PC-3 (cell line): ENCODE measurements at regions of chr3 and their contacts with region 1.

Region 1: GRCh38 chr3:178966299-178967176 is 105.1 kb downstream of the ZMAT3 start:
- DNase-seq: peak; percentile 61
- ATAC-seq: peak; percentile 57
- H3K4me3 ChIP-seq: peak overlapping the region; percentile 26; the same call in 1 of the 2 replicates
- H3K27ac ChIP-seq: no peak overlapping the region
- H3K4me1 ChIP-seq: peaks cover 2% of the 10 kb centered on the region; the same call in 1 of the 2 replicates
- H3K27me3 ChIP-seq: peaks cover 4% of the 10 kb centered on the region; the same call in 1 of the 2 replicates
- CTCF ChIP-seq: peak; percentile 80

Region 2: DNA sequence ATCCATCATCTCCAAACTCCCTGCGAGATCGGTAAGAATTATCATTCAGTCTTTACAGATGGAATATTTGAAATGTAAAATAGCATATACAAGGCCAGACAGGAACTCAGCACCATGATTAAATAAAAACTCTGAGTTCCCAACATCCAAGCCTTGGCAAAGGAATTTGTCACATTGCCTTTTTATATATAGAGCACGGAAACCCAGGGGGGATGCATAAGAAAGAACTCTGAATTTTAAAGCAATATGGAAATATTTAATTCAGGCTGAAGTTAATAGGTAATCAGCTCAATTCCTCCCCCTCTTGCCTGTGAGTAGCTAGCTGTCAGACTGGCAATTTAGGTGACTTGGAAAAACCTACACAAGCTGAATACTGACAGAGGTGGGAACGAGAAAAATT is 648.2 kb before region 1 on chr3:
- CTCF ChIA-PET with region 1: no interaction called
- POLR2A ChIA-PET with region 1: no interaction called
- intact Hi-C with region 1: no loop called
- DNase-seq: no peak
- ATAC-seq: no peak
- H3K4me3 ChIP-seq: no peak overlapping the region
- H3K27ac ChIP-seq: no peak overlapping the region
- H3K4me1 ChIP-seq: no peaks in the 10 kb centered on the region
- H3K27me3 ChIP-seq: no peaks in the 10 kb centered on the region
- CTCF ChIP-seq: no peak

Region 3: GRCh38 chr3:178436773-178437172 is 529.8 kb before region 1 on chr3:
- CTCF ChIA-PET with region 1: interaction called, 3 read pairs
- POLR2A ChIA-PET with region 1: no interaction called
- intact Hi-C with region 1: loop called (anchors 1 kb)
- DNase-seq: peak; percentile 60
- ATAC-seq: no peak
- H3K4me3 ChIP-seq: no peak overlapping the region
- H3K27ac ChIP-seq: no peak overlapping the region
- H3K4me1 ChIP-seq: no peaks in the 10 kb centered on the region
- H3K27me3 ChIP-seq: no peaks in the 10 kb centered on the region
- CTCF ChIP-seq: peak; percentile 70

Region 4: DNA sequence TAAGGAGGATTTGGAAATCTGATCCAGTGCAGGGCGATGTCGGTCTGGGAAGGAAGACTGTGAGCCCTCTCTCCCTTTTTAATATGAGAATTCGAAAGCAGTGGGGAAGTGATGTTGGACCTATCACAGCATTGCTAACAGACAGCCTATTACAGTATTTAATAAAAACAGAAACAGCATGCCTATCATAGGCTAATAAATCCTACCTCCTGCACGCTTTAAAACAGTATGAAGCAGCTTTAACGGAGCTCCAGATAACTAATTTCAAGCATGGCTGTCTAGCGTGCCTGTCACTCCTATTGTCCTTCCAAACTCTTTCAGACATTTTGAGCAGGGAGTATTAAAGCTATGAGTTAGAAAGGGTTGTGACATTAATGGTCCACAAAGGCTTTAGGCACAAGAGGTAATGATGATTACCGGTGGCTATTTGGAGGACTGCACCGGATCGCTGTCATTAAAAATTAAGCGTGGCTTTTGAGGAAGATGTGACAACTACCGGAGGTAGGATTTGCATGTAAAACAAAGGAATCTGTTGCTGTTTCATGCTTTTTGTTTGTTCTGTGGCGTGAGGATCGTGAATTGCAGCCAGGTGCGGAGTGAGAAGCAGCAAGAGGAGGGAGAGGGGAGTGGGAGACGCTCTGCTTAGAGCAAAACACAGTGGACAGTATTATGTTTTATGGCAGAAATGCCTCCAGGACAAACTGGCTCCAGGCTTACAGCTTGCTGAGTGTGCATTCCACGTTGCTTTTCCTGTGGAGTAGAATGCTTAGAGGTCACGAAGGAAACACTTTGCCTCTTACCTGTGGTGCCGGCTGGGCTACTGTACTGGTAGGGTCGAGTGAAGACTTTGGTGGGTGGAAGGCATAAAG is 430.1 kb before region 1 on chr3 and contains the start of gene KCNMB2:
- CTCF ChIA-PET with region 1: no interaction called
- POLR2A ChIA-PET with region 1: no interaction called
- intact Hi-C with region 1: loop called (anchors 10 kb)
- DNase-seq: no peak
- ATAC-seq: no peak
- H3K4me3 ChIP-seq: no peak within 1 kb of the TSS
- H3K27ac ChIP-seq: no peak within 1 kb of the TSS
- H3K4me1 ChIP-seq: no peaks in the 10 kb centered on the region
- H3K27me3 ChIP-seq: peaks cover 87% of the 10 kb centered on the region
- CTCF ChIP-seq: no peak
- total RNA-seq, gene KCNMB2: not detected in 2 replicates

Region 5: DNA sequence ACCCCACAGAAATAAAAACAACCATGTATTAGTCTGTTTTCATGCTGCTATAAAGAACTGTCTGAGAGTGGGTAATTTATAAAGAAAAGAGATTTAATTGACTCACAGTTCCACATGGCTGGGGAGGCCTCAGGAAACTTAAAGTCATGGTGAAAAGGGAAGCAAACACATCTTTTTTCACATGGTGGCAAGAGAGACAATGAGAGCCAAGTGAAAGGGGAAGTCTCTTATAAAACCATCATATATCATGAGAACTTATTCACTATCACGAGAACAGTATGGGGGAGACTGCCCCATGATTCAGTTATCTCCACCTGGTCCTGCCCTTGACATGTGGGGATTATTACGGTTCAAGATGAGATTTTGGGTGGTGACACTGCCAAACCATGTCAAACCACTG is 36.4 kb before region 1 on chr3:
- CTCF ChIA-PET with region 1: no interaction called
- POLR2A ChIA-PET with region 1: no interaction called
- intact Hi-C with region 1: no loop called
- DNase-seq: no peak
- ATAC-seq: no peak
- H3K4me3 ChIP-seq: no peak overlapping the region
- H3K27ac ChIP-seq: no peak overlapping the region
- H3K4me1 ChIP-seq: no peaks in the 10 kb centered on the region
- H3K27me3 ChIP-seq: no peaks in the 10 kb centered on the region
- CTCF ChIP-seq: no peak

Region 6: DNA sequence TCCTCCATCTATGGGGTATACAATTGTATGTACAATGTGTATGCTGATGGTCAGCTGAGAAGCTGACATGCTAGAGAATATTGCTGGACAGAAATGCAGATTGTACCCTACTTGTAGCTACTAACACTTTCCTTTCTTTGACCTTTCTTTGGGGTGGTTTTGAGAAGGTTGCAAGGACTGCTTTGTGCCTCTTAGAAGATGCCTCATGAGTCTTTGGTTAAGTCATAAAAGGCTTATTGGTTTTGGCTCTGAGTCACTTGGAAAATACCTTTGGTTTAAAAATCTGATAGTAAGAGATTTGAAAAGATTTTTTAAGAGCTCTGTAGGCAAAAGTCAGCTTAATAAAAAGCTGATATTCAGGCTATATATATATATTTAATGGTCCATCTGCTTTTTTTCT is 33.6 kb after region 1 on chr3:
- CTCF ChIA-PET with region 1: no interaction called
- POLR2A ChIA-PET with region 1: no interaction called
- intact Hi-C with region 1: no loop called
- DNase-seq: peak; percentile 54
- ATAC-seq: peak; percentile 71
- H3K4me3 ChIP-seq: no peak overlapping the region
- H3K27ac ChIP-seq: no peak overlapping the region
- H3K4me1 ChIP-seq: no peaks in the 10 kb centered on the region
- H3K27me3 ChIP-seq: no peaks in the 10 kb centered on the region
- CTCF ChIP-seq: no peak